ENCODE measurements at regions of chr13 and their contacts with region 1.

Region 1: DNA sequence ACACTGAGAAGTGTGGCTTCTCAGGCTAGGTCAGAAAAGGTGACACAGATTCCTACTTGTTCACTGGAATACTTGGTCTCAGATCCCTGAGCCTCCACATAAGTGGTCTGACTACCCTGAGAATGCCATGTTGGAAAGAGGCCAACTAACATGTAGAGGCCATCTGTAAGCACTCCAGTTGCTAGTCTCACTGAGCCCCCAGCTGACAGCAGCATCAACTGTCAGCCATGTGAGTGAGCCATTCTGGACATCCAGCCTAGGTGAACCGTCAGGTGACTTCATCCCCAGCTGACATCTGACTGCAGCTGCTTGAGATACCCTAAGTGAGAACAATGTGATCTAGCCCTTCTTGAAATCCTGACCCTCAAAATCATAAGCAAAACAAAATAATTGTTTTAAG is 18.1 kb upstream of the ARL11 start:
- DNase-seq: no peak
- ATAC-seq: no peak
- H3K4me3 ChIP-seq: no peak overlapping the region
- H3K27ac ChIP-seq: no peak overlapping the region
- H3K4me1 ChIP-seq: no peaks in the 10 kb centered on the region
- H3K27me3 ChIP-seq: no peaks in the 10 kb centered on the region
- CTCF ChIP-seq: no peak

Region 2: GRCh38 chr13:49300739-49301589 is 309.2 kb before region 1 on chr13:
- intact Hi-C with region 1: loop called (anchors 5 kb)
- DNase-seq: peak; percentile 57
- ATAC-seq: peak; percentile 80 to 86
- H3K4me3 ChIP-seq: peak overlapping the region; percentile 41
- H3K27ac ChIP-seq: no peak overlapping the region
- H3K4me1 ChIP-seq: peaks cover 18% of the 10 kb centered on the region
- H3K27me3 ChIP-seq: no peaks in the 10 kb centered on the region
- CTCF ChIP-seq: peak; percentile 90